Ascending aorta (tissue), 2 donors: ENCODE measurements at regions of chr3 and their contacts with region 1.

Region 1: GRCh38 chr3:52685709-52686691 is at the starts of genes GNL3 and PBRM1:
- DNase-seq: peak; percentile 74 to 96
- H3K4me3 ChIP-seq: peak within 1 kb of the TSS; percentile 78 to 79
- H3K27ac ChIP-seq: peak within 1 kb of the TSS; percentile 89 to 98
- H3K4me1 ChIP-seq: peaks cover 3 to 30% of the 10 kb centered on the region in 2 donors
- H3K27me3 ChIP-seq: no peaks in the 10 kb centered on the region
- CTCF ChIP-seq: no peak
- total RNA-seq, gene GNL3: 50.4 TPM
- total RNA-seq, gene PBRM1: 36.7 TPM

Region 2: GRCh38 chr3:52455283-52456168 is 230.5 kb before region 1 on chr3 and contains the start of gene NISCH:
- intact Hi-C with region 1: loop called (anchors 10 kb)
- DNase-seq: peak; percentile 46 to 95
- H3K4me3 ChIP-seq: peak within 1 kb of the TSS; percentile 93 to 94
- H3K27ac ChIP-seq: peak within 1 kb of the TSS; percentile 89 to 94
- H3K4me1 ChIP-seq: peaks cover 12 to 14% of the 10 kb centered on the region in 2 donors
- H3K27me3 ChIP-seq: no peaks in the 10 kb centered on the region
- CTCF ChIP-seq: no peak
- total RNA-seq, gene NISCH: 58.3 TPM

Region 3: GRCh38 chr3:52670621-52671521 is 15.1 kb before region 1 on chr3:
- intact Hi-C with region 1: loop called (anchors 1 kb)
- DNase-seq: peak in 1 of 2 donors; percentile 77
- H3K4me3 ChIP-seq: peak overlapping the region in 1 of 2 donors; percentile 4
- H3K27ac ChIP-seq: peak overlapping the region; percentile 59 to 70
- H3K4me1 ChIP-seq: peaks cover 0 to 9% of the 10 kb centered on the region in 2 donors
- H3K27me3 ChIP-seq: no peaks in the 10 kb centered on the region
- CTCF ChIP-seq: no peak

Region 4: DNA sequence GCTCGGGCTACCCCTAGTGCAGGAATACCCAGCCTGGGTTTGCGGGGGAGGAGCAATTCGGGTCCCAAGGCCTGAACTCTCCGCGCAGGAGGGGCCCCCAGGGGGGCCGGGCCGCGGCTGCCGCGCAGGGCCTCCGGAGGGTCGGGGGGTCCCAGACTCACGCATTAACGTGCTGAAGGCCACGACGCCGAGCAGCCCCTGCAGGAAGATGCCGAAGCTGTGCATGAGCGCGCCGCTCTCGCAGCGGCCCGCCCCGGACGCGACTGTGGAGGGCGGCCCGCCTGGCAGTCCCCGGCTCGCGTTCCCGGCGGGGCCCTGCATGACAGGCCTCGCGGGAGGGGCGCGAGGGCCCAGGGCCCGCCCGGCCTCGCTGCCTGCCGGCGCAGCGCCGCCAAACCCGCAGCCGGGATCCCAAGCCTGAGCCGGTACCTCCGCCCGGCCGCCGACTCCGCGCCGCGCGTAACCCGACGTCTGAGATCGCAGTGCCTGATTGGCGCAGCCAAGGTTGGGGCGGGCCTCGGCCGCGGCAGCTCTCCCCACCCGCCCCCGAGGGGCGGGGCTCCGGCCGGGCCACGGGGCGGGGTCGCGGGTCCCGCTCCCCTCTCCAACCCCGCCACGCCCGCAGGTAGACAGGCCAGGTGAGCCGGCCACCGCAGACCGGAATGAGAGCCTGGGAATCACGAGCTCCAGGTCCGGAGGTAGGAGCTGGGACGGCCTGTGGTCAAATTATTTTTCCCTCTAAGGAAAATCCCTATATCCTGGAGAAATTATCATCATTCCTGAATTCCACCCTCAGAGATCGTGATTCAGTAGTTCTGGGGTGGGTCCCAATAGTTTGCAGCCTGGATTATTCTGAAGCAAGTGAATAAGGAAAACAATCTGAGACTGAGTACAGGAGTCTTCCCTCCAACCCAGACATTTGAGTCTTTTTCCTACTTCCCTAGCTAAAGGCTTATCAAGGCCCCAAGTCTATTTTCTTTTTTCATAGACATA is 211.4 kb after region 1 on chr3 and contains the start of gene STIMATE:
- intact Hi-C with region 1: loop called (anchors 1 kb)
- DNase-seq: peak; percentile 53 to 93
- H3K4me3 ChIP-seq: peak within 1 kb of the TSS; percentile 68 to 91
- H3K27ac ChIP-seq: peak within 1 kb of the TSS; percentile 80 to 87
- H3K4me1 ChIP-seq: peaks cover 7 to 32% of the 10 kb centered on the region in 2 donors
- H3K27me3 ChIP-seq: no peaks in the 10 kb centered on the region
- CTCF ChIP-seq: no peak
- total RNA-seq, gene STIMATE: 18.9 TPM